ENCODE measurements at regions of chr7 and their contacts with region 1.

Region 1: GRCh38 chr7:94395141-94396036 is 694 bp downstream of the COL1A2 start:
- DNase-seq: peak in 1 of 2 donors; percentile 78
- H3K4me3 ChIP-seq: peak overlapping the region; percentile 74 to 80
- H3K27ac ChIP-seq: peak overlapping the region; percentile 91 to 97
- H3K4me1 ChIP-seq: peaks cover 3 to 40% of the 10 kb centered on the region in 2 donors
- H3K27me3 ChIP-seq: no peaks in the 10 kb centered on the region
- CTCF ChIP-seq: peak; percentile 81 to 86 (median 84)

Region 2: GRCh38 chr7:94004024-94004951 is 391.1 kb before region 1 on chr7 and contains the start of gene BET1:
- intact Hi-C with region 1: loop called (anchors 10 kb)
- DNase-seq: peak; percentile 88 to 98
- H3K4me3 ChIP-seq: peak within 1 kb of the TSS; percentile 81 to 94
- H3K27ac ChIP-seq: peak within 1 kb of the TSS; percentile 89 to 91
- H3K4me1 ChIP-seq: peaks cover 0 to 3% of the 10 kb centered on the region in 2 donors
- H3K27me3 ChIP-seq: no peaks in the 10 kb centered on the region
- CTCF ChIP-seq: no peak
- total RNA-seq, gene BET1: 2.4 TPM

Region 3: DNA sequence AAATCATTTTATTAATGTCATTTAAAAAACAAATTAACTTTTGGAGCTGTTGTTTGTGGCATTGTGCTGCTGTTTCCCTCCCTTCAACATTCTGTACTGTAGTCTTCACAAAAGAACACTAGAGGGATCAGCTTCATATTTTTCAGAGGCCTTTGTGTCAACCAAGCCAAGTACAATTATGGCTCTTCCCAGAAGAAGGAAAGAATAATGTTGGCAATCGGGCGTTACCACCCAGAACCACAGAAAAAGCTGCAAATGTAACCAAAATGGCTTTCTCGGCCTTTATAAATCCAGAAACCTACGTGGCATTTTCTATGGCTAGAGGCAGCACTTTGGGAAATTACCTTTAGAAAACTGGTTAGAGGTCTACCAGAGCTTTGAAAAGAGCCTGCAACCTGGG is 99.5 kb before region 1 on chr7:
- intact Hi-C with region 1: loop called (anchors 1 kb)
- DNase-seq: no peak
- H3K4me3 ChIP-seq: peak overlapping the region; percentile 37 to 61
- H3K27ac ChIP-seq: peak overlapping the region; percentile 86
- H3K4me1 ChIP-seq: peaks cover 8 to 41% of the 10 kb centered on the region in 2 donors
- H3K27me3 ChIP-seq: no peaks in the 10 kb centered on the region
- CTCF ChIP-seq: peak; percentile 51 to 74 (median 69)

Region 4: GRCh38 chr7:94374721-94375566 is 20.4 kb before region 1 on chr7:
- intact Hi-C with region 1: loop called (anchors 1 kb)
- DNase-seq: peak in 1 of 2 donors; percentile 84
- H3K4me3 ChIP-seq: peak overlapping the region; percentile 39 to 51
- H3K27ac ChIP-seq: peak overlapping the region; percentile 91 to 92
- H3K4me1 ChIP-seq: peaks cover 4 to 15% of the 10 kb centered on the region in 2 donors
- H3K27me3 ChIP-seq: no peaks in the 10 kb centered on the region
- CTCF ChIP-seq: no peak

Region 5: DNA sequence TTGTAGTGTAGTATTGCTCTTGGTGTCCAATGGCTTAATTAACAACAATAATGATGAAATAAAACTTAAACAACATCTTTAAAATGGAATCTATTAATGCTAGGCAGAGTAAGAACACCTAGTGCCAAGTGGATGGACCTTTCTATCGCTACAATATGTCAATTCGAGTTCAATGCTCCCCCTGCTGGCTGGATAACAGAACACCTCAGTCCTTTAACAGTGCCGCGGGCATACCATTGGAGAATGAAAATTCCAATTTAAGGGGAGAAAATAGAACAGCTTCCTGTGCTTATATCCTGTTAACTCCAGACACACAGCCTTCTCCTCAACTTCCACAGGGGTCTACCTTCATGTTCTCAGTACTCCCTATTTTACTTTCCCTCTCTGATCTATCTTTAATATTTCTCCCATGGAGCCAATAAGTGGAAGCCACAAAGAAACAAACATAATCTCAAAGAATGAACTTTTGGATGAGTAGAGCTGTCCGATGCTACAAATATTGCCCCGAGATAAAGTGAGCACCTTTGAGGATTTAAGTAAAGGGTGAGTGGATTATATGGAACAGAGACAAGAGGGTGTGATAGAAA is 40.7 kb after region 1 on chr7:
- intact Hi-C with region 1: loop called (anchors 5 kb)
- DNase-seq: peak in 1 of 2 donors; percentile 82
- H3K4me3 ChIP-seq: no peak overlapping the region
- H3K27ac ChIP-seq: no peak overlapping the region
- H3K4me1 ChIP-seq: no peaks in the 10 kb centered on the region
- H3K27me3 ChIP-seq: no peaks in the 10 kb centered on the region
- CTCF ChIP-seq: peak; percentile 65 to 77 (median 74)